Tibial artery (tissue), 4 donors: ENCODE measurements at regions of chr10 and their contacts with region 1.

Region 1: GRCh38 chr10:88114368-88114767 is 250.9 kb downstream of the PTEN start:
- DNase-seq: peak; percentile 43 to 76
- H3K4me3 ChIP-seq: no peak overlapping the region
- H3K27ac ChIP-seq: no peak overlapping the region
- H3K4me1 ChIP-seq: peaks cover 0 to 24% (median 7%) of the 10 kb centered on the region in 4 donors
- H3K27me3 ChIP-seq: no peaks in the 10 kb centered on the region
- CTCF ChIP-seq: peak; percentile 65 to 68

Region 2: DNA sequence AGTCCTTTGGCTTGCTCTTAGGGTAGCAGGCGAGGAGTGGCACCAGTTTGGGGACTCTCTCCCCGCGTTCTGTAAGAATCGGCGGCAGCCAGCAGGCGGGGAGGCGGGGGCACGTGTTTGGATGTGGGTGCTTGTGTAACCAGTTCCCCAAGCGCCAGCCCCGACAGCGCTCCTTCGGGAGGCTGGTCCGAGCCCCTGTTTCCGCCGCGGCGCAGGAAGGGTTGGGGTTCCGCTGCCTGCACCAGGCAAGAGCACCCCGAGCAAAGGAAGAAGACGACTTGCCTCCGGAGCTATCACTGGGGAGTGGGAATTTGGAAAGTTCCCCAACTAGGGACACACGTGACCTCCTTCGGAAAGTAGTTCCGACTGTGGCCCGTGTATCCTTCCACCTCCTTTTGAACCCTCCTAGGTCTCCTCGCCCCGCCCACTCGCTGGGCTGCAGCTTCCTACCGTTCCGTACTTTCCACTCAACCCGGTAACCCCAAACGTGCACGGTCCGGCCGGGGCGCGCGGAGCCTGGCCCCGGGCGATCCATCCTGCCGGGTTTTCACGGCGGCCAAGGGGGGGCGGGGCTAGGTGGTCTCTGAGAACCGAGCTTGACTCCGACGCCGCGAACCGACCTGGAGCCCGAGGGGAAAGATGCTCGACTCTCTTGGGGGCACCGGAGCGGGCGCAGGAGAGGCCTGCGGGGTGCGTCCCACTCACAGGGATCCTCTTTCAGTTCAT is 252.3 kb before region 1 on chr10:
- intact Hi-C with region 1: loop called (anchors 5 kb)
- DNase-seq: peak; percentile 95 to 99
- H3K4me3 ChIP-seq: peak overlapping the region; percentile 83 to 97
- H3K27ac ChIP-seq: peak overlapping the region; percentile 83 to 100
- H3K4me1 ChIP-seq: peaks cover 0 to 12% (median 7%) of the 10 kb centered on the region in 4 donors
- H3K27me3 ChIP-seq: no peaks in the 10 kb centered on the region
- CTCF ChIP-seq: peak in 1 of 2 experiments; percentile 20

Region 3: DNA sequence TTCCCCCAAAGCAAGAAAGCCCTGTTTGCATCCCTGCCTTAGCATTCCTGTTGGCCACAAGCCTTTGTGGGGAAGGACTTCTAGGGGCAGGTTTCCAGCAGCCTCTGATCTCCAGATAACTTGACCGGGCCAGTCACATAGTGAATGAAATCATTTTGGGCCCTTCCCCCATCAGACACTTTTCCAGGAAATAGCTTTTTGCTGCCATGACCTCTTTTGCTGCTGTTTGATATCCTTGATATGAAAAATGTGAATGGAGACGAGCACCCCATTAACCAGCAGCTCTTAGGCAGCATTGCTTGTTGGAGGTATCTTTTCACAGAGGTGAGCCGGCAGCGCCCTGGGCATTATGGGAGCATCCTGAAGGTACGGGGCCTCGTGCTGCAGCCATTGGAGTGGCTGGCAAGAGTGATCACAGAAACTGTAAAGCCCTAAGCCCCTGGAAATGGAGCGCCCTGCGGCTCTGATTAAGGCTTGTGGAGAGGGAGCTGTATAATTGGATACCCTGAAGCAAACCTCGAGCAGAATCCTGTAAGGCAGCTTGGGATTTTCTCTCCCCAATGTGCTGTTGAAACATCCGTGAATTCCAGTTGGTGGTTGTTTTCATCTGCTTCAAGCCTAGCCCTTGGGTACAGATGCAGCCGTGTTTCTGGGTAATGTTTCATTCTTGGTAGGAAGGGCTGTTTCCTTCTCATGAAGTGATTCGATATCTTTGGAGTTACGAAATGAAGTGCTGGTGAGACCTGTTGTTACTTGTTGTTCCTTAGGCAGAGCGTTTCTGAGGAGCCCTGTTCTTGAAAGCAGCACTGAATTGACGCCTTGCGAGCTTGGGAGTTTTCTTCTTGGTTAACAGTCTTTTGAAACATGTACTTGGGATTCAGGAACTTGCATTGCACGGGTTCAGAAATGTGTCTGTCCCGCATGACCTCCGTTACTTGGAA is 71.9 kb before region 1 on chr10:
- intact Hi-C with region 1: loop called (anchors 5 kb)
- DNase-seq: peak in 1 of 2 donors; percentile 47
- H3K4me3 ChIP-seq: peak overlapping the region; percentile 9 to 15
- H3K27ac ChIP-seq: peak overlapping the region; percentile 72 to 81
- H3K4me1 ChIP-seq: peaks cover 0 to 86% (median 31%) of the 10 kb centered on the region in 4 donors
- H3K27me3 ChIP-seq: no peaks in the 10 kb centered on the region
- CTCF ChIP-seq: no peak

Region 4: GRCh38 chr10:88386821-88387773 is 272.7 kb after region 1 on chr10:
- intact Hi-C with region 1: loop called (anchors 5 kb)
- DNase-seq: peak in 1 of 2 donors; percentile 21
- H3K4me3 ChIP-seq: peak overlapping the region; percentile 33 to 38
- H3K27ac ChIP-seq: peak overlapping the region; percentile 74 to 76
- H3K4me1 ChIP-seq: peaks cover 0 to 24% (median 16%) of the 10 kb centered on the region in 4 donors
- H3K27me3 ChIP-seq: no peaks in the 10 kb centered on the region
- CTCF ChIP-seq: no peak

Region 5: DNA sequence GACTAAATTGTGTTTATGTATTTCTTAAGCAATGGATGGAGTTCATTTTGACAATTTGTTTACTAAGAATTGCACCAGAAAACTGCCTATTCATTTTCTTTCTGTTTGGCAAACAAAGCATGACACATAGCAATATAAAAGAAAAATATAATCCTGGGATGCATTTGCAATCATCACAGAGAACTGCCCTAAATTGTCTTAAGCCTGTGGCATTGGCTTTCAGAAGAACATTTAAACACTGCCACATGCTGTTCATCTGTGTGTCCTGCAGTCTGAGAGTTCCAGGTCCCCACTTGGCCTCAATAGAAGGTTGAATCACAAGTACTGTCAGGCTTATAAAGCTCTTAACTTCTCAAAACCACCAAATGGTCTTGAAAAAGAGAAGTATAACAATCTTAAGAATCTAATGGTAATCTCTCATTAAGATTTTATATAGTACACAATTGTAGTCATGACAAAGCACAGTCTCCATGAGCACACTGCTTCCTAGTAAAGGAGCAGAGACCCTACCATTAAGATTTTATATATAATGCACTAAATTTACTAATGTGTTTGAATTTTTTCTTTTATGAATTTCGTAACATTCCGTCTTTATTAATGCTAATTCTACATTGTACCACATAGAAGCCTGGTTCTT is 438.9 kb after region 1 on chr10:
- intact Hi-C with region 1: loop called (anchors 10 kb)
- DNase-seq: peak; percentile 34 to 70
- H3K4me3 ChIP-seq: no peak overlapping the region
- H3K27ac ChIP-seq: no peak overlapping the region
- H3K4me1 ChIP-seq: peaks cover 0 to 7% (median 0%) of the 10 kb centered on the region in 4 donors
- H3K27me3 ChIP-seq: no peaks in the 10 kb centered on the region
- CTCF ChIP-seq: peak; percentile 69 to 77